Endothelial cell of umbilical vein (primary cell): ENCODE measurements at regions of chr12 and their contacts with region 1.

Region 1: GRCh38 chr12:46124848-46125619 is 134.7 kb upstream of the SCAF11 start:
- DNase-seq: peak; percentile 75
- H3K4me3 ChIP-seq: peak overlapping the region in 1 of 3 experiments; percentile 27
- H3K27ac ChIP-seq: no peak overlapping the region
- H3K4me1 ChIP-seq: peaks cover 4% of the 10 kb centered on the region
- H3K27me3 ChIP-seq: peaks cover 16 to 29% of the 10 kb centered on the region in 2 experiments
- CTCF ChIP-seq: peak; percentile 51 to 53
- POLR2A ChIP-seq: no peak

Region 2: DNA sequence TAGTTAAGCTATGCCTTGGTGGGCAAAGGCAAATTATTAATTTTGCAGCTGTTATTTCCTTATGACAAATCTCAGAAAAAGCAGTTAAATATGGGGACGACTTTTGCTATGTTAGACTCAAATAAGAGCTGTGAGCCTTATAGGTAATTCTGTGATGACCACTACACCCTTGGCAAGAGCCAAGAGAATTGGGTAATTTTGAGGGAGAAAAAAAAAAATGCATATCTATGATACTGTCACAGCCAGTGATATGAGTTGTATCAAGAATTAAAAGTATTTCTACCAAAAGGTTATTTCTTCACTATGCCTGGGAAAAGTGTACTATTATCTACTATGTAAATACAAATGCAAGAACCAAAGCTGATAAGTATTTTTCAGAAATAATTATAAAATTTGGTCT is 178.6 kb before region 1 on chr12:
- CTCF ChIA-PET with region 1: no interaction called
- POLR2A ChIA-PET with region 1: no interaction called
- dilution Hi-C with region 1: no loop called
- intact Hi-C with region 1: no loop called
- DNase-seq: no peak
- H3K4me3 ChIP-seq: no peak overlapping the region
- H3K27ac ChIP-seq: no peak overlapping the region
- H3K4me1 ChIP-seq: no peaks in the 10 kb centered on the region
- H3K27me3 ChIP-seq: no peaks in the 10 kb centered on the region
- CTCF ChIP-seq: no peak
- POLR2A ChIP-seq: no peak

Region 3: DNA sequence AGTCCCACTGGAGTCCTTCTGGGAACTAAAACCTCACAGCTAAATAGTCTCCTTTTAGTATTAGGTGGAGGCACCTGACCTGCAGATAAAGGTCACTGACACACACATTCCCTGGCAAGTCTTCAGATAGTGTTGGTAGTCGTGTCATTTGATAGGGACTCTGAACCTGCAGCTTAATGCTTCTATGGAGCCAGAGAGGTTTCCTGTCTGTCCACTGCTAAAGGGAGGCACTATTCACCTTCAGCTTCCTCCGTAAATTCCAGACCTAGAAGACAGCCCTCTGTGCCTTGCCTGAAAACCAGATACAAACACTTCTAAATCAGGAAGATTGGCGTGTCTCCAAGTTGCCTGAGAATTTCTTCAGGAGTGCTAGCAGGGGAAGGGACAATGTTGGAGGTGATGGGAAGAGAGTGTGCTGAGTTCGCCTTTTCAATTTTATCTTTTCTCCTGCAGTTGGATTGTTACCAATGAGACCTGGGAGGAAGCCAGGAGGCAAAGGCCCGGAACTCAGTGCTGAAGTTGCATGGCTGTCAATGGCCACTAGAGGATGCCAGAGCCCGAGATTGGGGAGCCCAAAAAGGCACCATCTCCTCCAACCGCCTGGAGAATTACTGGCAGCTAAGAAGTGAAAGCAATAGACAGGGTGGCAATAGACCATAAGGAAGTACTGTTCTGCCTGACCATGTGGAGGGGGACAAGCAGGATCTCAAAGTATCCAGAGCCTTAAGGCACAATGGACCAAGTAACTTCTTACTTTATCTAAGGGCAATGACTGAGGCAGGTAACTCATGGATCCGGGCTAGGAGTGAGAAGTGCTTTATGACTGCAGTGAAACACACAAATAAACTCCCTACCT is 53.0 kb before region 1 on chr12:
- CTCF ChIA-PET with region 1: interaction called, 18 read pairs
- POLR2A ChIA-PET with region 1: no interaction called
- dilution Hi-C with region 1: no loop called
- intact Hi-C with region 1: no loop called
- DNase-seq: peak; percentile 67
- H3K4me3 ChIP-seq: no peak overlapping the region
- H3K27ac ChIP-seq: no peak overlapping the region
- H3K4me1 ChIP-seq: no peaks in the 10 kb centered on the region
- H3K27me3 ChIP-seq: peaks cover 10 to 14% of the 10 kb centered on the region in 2 experiments
- CTCF ChIP-seq: peak; percentile 88 to 94
- POLR2A ChIP-seq: no peak

Region 4: GRCh38 chr12:46144433-46144832 is 19.4 kb after region 1 on chr12:
- CTCF ChIA-PET with region 1: interaction called, 12 read pairs
- POLR2A ChIA-PET with region 1: no interaction called
- dilution Hi-C with region 1: no loop called
- intact Hi-C with region 1: no loop called
- DNase-seq: no peak
- H3K4me3 ChIP-seq: no peak overlapping the region
- H3K27ac ChIP-seq: no peak overlapping the region
- H3K4me1 ChIP-seq: no peaks in the 10 kb centered on the region
- H3K27me3 ChIP-seq: peaks cover 6 to 22% of the 10 kb centered on the region in 2 experiments
- CTCF ChIP-seq: no peak
- POLR2A ChIP-seq: no peak

Region 5: DNA sequence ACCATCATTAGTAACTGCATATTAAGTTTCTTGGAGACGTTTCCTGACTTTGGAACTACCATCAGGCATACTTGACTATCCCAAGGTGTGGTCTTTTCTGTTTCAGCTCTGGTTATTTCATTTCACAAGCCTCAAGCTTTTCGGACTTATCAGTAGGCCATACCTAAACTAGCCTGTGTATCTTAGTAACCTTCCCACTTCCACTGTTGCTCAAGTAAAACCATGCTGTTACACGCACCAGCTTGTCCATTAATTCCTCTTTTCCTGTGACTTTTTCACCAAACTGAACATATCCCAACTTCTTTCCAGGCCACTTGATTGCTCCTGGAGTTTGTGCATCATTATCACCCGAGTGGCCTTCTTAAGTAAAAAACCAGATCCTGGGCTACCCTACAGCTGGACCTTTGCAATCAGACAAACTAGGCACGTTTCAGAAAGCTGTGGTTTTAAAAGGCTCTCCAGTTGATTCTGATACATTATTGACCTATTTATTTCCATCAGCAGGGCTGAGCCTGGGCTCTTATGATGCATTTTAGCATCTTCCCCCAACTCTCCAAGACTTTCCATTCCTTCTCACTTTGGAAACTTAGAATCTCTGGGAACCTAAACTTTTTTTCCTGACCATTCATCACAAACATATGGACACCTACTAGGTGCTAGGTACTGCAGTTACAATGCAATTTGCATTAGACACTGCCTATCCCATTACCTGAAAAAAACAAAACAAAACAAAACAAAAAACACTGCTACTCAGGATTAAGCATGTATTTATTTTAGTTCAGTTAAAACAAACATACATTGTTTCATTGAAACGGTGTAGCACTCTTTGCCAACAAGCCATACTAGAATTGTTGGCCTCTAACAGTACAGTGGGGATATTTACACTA is 232.6 kb after region 1 on chr12:
- CTCF ChIA-PET with region 1: interaction called, 25 read pairs
- POLR2A ChIA-PET with region 1: no interaction called
- dilution Hi-C with region 1: no loop called
- intact Hi-C with region 1: no loop called
- DNase-seq: peak; percentile 81
- H3K4me3 ChIP-seq: no peak overlapping the region
- H3K27ac ChIP-seq: no peak overlapping the region
- H3K4me1 ChIP-seq: peaks cover 2% of the 10 kb centered on the region
- H3K27me3 ChIP-seq: no peaks in the 10 kb centered on the region
- CTCF ChIP-seq: no peak
- POLR2A ChIP-seq: peak; percentile 91

Region 6: DNA sequence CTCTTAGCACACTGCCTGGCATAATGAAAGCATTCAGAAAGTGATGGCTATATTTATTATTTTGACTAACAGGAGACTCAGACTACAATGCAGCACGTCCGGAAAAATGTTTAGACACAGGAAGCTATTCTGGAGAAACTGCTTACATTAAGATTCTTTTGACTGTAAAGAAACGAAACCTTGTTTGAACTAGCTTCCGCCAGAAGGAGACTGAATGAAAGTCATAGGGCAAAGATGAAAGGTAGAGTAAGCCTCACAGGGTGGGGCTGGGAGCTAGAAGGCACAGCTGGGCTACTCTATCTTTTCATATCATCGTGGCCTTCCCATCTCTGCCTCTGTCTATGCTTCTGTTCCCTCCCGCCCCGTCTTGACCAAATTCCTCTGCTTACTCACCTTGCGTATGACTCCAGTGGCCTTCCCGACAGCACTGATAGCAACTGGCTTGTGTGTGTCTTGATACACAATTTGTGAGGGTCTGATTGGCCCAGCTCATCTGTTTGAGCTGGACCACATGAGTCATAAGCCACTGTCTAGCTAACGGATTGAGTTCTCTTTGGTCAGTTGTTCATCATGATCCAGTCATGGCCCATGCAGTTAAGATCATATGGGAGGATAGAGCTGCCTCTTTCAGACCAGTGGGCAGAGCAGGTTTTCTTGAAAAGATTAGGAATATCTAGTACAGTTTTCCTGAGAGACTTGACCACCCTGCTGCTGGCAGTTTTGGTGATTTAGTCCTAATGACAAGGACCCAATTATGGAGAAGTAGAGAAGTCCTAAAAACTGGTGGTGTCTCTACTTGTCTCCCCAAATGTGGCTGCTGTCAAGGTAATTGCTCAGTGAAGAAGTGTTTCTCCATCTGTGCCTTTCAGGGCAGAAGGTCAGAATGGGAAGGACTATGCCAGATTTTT is 399.1 kb after region 1 on chr12:
- CTCF ChIA-PET with region 1: no interaction called
- POLR2A ChIA-PET with region 1: no interaction called
- dilution Hi-C with region 1: no loop called
- intact Hi-C with region 1: no loop called
- DNase-seq: peak; percentile 83
- H3K4me3 ChIP-seq: peak overlapping the region in 1 of 3 experiments; percentile 34
- H3K27ac ChIP-seq: peak overlapping the region; percentile 81
- H3K4me1 ChIP-seq: peaks cover 33% of the 10 kb centered on the region
- H3K27me3 ChIP-seq: no peaks in the 10 kb centered on the region
- CTCF ChIP-seq: no peak
- POLR2A ChIP-seq: no peak

Region 7: DNA sequence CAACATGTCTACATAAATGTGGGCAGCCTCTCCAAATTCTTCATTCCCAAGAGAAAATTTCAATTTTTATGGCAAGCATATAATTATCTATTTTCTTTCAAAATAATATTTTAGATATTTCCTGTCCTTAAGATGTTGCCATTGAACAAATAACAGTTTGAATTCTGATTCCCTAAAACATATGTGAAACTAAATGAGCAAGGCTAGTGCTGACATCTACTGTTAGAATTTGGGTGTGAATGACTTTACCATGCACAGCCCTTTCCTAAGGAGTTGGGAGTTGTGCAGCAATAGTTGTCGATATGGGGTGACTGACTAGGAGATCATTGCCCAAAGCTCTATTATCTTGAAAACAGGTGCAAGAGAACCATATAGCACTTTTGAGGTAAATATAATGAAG is 808.9 kb after region 1 on chr12:
- CTCF ChIA-PET with region 1: interaction called, 32 read pairs
- POLR2A ChIA-PET with region 1: no interaction called
- dilution Hi-C with region 1: no loop called
- intact Hi-C with region 1: loop called (anchors 1 kb)
- DNase-seq: peak; percentile 71
- H3K4me3 ChIP-seq: no peak overlapping the region
- H3K27ac ChIP-seq: no peak overlapping the region
- H3K4me1 ChIP-seq: no peaks in the 10 kb centered on the region
- H3K27me3 ChIP-seq: peaks cover 0 to 2% of the 10 kb centered on the region in 2 experiments
- CTCF ChIP-seq: peak in 1 of 2 donors; percentile 34
- POLR2A ChIP-seq: no peak

Region 8: GRCh38 chr12:47032644-47033043 is 907.6 kb after region 1 on chr12:
- CTCF ChIA-PET with region 1: interaction called, 13 read pairs
- POLR2A ChIA-PET with region 1: no interaction called
- dilution Hi-C with region 1: no loop called
- intact Hi-C with region 1: no loop called
- DNase-seq: peak; percentile 74
- H3K4me3 ChIP-seq: no peak overlapping the region
- H3K27ac ChIP-seq: no peak overlapping the region
- H3K4me1 ChIP-seq: no peaks in the 10 kb centered on the region
- H3K27me3 ChIP-seq: no peaks in the 10 kb centered on the region
- CTCF ChIP-seq: peak; percentile 17 to 25
- POLR2A ChIP-seq: no peak